ENCODE measurements at regions of chr10 and their contacts with region 1.

Region 1: GRCh38 chr10:72692057-72692910 is at the start of gene MCU:
- DNase-seq: peak; percentile 95
- H3K4me3 ChIP-seq: peak within 1 kb of the TSS; percentile 97
- H3K27ac ChIP-seq: peak within 1 kb of the TSS; percentile 37
- H3K4me1 ChIP-seq: peaks cover 31% of the 10 kb centered on the region
- CTCF ChIP-seq: no peak
- total RNA-seq, gene MCU: 7.7 and 9.9 TPM in 2 replicates

Region 2: GRCh38 chr10:72834183-72834825 is 142.0 kb after region 1 on chr10:
- CTCF ChIA-PET with region 1: no interaction called
- POLR2A ChIA-PET with region 1: no interaction called
- intact Hi-C with region 1: loop called (anchors 10 kb)
- DNase-seq: peak; percentile 60
- H3K4me3 ChIP-seq: no peak overlapping the region
- H3K27ac ChIP-seq: no peak overlapping the region
- H3K4me1 ChIP-seq: no peaks in the 10 kb centered on the region
- CTCF ChIP-seq: peak; percentile 86

Measured in OCI-LY7 (cell line).